Sciatic nerve (tissue), 2 donors: ENCODE measurements at regions of chr13 and their contacts with region 1.

Region 1: DNA sequence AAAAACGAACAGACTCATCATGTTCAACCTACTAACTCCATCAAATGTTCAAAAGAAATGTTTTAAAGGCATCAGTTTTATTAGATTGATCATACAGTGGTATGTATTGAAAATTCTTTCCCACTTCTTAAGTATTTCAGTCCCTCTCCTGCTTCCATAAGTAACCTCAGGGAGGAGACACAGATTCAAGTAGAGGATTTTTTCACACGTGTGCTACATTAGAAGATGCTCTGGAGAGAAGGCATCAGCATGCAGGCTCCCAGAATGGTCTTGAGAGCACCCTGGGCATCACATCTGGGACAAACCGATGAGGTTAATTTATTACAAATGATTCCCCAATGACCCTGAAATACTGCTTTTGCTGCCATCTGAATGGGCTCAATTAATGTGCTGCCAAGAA is 3.6 kb downstream of the GPR12 start:
- DNase-seq: no peak
- ATAC-seq: no peak

Region 2: DNA sequence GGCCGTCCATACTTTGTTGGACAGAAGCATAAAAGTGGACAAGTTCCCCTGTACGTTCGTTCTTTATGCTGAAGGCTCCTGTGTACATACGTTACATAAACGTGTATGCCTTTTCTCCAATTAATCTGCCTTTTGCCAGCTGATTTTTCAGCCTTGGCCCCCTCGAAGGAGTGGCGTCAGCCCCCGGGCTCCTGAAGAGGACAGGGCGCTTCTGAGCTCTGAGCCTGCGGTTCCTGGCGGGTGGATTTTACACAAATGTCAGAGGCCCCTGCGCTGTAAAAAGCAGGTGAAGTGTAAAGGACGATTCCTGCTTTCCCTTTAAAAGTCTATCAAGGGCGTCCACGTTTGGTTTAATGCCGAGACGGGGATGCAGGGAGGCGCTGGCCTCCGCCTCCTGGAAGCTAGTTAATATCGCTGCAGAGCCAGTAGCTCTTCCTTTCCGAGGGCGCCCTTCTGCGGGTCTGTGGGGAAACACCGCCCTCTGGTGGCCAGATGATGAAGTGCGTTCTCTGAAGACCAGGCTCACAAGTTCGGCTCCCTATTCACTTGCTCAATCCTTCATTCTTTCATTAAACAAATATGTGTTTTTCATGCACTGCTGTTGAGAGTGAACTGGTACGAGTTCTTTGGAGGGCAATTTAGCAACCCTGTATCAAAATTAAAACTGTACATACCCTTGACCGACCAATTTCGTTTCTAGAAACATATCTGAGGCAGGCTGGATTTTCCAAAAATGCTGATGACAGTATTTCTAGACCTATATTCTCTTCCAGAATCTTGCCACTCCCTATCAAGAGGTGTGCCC is 58.4 kb before region 1 on chr13:
- intact Hi-C with region 1: loop called (anchors 2 kb)
- DNase-seq: peak; percentile 90
- ATAC-seq: peak; percentile 90